Activated CD4-positive, alpha-beta memory T cell treated with anti-CD3 and anti-CD28 coated beads for 36 hours (primary cell): ENCODE measurements at regions of chr6 and their contacts with region 1.

Region 1: GRCh38 chr6:25138237-25139125 is 140.7 kb upstream of the CARMIL1 start:
- DNase-seq: peak; percentile 81
- H3K4me3 Mint-ChIP-seq: peak overlapping the region; percentile 89
- H3K27ac Mint-ChIP-seq: peak overlapping the region; percentile 99
- H3K4me1 Mint-ChIP-seq: peaks cover 40% of the 10 kb centered on the region
- H3K27me3 Mint-ChIP-seq: no peaks in the 10 kb centered on the region

Region 2: DNA sequence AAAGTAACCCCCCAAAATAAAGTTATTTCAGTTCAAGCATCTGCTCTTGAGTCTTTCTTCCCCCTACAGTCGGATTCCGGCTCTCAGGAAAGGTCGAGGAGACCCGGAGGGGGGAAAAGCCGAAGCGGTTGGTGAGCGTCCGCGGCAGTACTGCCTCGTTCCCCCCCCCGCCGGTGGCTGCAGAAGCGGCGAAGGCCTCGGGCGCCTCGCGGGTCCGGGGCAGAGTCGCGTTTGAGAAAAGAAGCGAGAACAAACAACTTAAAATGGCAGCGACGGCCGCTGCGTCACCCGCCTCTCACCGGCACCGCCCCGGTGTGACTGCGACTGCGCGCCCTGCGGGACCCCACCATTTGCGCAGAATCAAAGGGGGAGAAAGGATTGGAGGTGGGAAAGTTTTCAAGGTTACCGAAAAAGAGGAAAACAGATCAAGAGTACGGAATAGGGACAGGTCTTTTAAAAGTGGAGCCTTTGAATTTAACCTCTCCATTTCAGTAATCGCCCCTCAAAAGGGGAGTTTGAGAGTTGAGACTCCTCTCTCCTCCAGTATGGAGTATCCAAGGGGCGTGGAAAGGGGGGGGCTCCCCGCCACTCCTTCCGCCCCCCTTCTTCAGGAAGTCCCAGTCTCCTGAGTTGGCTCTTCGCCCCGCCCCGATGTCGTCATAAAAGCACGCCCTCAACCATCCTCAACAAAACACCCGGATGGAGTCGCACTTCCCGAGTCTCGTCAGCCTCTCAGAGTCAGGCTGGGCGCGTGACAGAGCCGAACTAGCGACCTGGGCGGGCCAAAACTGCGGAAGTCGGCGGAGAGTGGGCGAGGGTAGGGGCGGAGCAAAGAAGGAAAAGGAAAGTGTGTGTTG is 417.6 kb before region 1 on chr6:
- CTCF ChIA-PET with region 1: no interaction called
- POLR2A ChIA-PET with region 1: no interaction called
- intact Hi-C with region 1: loop called (anchors 1 kb)
- DNase-seq: peak; percentile 100
- H3K4me3 Mint-ChIP-seq: peak overlapping the region; percentile 100
- H3K27ac Mint-ChIP-seq: peak overlapping the region; percentile 99
- H3K4me1 Mint-ChIP-seq: peaks cover 32% of the 10 kb centered on the region
- H3K27me3 Mint-ChIP-seq: peaks cover 1% of the 10 kb centered on the region

Region 3: DNA sequence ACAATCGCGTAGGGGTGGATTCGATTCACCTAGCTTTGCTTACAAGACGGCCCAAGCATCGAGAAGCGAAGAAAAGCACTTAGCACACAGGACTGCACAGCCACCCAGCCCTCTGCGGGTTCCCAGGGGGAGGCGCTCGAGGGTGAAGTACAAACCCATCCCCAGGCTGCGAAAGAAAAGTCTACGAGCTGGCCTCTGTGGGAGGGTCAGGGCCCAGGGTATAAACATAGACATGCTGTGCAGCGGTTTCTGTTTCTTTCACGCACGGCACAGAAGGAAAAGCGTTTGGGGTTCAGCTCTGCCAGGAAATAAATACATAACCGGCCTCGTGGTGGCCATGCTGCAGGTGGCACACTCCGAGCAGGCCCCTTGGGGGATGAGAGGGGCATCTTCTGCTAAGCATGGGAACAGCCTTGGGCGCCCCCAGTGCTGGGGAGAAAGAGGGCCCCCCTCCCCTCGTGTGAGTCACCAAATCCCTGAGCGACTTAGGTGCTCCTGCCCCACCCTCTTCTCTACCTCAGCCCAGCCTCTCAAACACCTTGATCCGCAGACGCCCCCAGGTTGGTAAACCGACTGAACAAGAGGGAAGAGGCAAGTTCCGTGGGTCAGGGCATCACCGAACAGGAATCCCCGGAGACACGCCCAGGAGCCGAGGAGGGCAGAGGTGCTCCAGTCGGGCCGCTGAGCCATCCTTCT is 111.1 kb before region 1 on chr6:
- CTCF ChIA-PET with region 1: interaction called, 3 read pairs
- POLR2A ChIA-PET with region 1: interaction called, 14 read pairs
- intact Hi-C with region 1: loop called (anchors 1 kb)
- DNase-seq: peak; percentile 92
- H3K4me3 Mint-ChIP-seq: peak overlapping the region; percentile 70
- H3K27ac Mint-ChIP-seq: peak overlapping the region; percentile 96
- H3K4me1 Mint-ChIP-seq: peaks cover 75% of the 10 kb centered on the region
- H3K27me3 Mint-ChIP-seq: no peaks in the 10 kb centered on the region

Region 4: DNA sequence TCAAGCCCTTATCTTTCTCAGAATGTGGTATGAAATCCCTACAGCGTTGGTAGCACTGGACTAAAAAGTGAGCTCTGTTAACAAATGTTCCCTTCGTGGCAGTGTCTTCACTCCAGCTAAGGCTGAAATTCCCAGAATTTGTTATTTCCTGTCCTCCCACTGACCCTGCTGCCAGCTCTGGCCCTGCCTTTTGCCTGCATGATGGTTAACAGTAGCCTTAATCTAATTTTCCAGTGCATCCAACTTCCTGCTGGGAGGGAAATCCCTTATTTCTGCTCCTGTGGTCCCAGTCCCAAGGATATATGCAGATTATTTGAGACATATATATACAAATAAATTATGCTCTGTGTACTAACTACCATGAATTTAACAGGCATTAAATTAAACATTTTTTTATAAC is 16.5 kb before region 1 on chr6:
- CTCF ChIA-PET with region 1: no interaction called
- POLR2A ChIA-PET with region 1: interaction called, 5 read pairs
- intact Hi-C with region 1: loop called (anchors 1 kb)
- DNase-seq: no peak
- H3K4me3 Mint-ChIP-seq: no peak overlapping the region
- H3K27ac Mint-ChIP-seq: no peak overlapping the region
- H3K4me1 Mint-ChIP-seq: peaks cover 54% of the 10 kb centered on the region
- H3K27me3 Mint-ChIP-seq: no peaks in the 10 kb centered on the region

Region 5: GRCh38 chr6:25179051-25179778 is 40.7 kb after region 1 on chr6:
- CTCF ChIA-PET with region 1: interaction called, 5 read pairs
- POLR2A ChIA-PET with region 1: interaction called, 18 read pairs
- intact Hi-C with region 1: loop called (anchors 1 kb)
- DNase-seq: no peak
- H3K4me3 Mint-ChIP-seq: no peak overlapping the region
- H3K27ac Mint-ChIP-seq: peak overlapping the region; percentile 16
- H3K4me1 Mint-ChIP-seq: peaks cover 42% of the 10 kb centered on the region
- H3K27me3 Mint-ChIP-seq: no peaks in the 10 kb centered on the region

Region 6: DNA sequence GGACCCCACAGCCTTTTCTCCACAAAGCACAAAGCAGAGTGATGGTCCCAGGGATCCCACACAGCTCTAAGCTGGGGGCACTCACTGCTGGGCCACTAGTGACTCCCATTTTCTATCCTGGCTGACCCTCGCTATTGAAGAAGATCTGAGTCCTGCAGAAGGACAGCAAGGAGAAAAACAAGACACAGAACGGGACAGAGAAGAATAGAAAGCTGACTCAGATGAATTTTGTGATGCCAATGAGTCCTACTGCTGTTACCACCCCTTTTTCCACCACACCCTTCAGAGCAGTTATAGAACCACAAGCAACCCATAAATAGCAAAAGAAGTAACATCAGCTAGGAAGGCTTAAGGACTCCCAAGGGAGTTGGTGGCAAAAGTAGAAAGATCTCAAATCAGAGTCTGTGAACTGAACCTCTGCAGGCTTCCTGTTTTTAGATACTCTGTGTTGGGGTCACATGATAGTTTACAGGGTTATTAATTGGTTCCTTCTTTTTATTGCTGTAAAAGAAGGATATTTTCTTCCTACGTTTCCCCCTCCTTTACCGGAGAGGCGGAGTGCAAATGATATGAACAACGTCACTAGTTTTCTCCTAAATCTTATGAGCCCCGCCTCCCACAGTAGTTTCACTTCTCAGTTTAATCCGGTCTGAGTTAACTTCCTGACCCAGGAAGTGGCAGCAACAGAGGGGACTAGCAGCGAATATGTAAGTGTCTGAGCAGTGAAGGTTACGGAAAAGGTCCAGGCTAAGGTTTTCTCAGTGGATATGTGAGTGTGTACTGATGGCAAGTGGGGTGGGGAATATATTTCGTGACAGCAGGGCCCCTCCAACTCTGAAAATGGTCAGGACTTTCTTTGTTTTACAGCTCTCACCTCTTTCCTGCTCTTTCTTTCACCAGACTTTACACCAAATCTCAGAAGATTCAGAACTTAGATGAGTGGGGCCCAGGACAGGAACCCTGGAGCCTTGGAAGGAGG is 824.0 kb after region 1 on chr6 and contains the start of gene TRIM38:
- CTCF ChIA-PET with region 1: no interaction called
- POLR2A ChIA-PET with region 1: no interaction called
- intact Hi-C with region 1: loop called (anchors 2 kb)
- DNase-seq: peak; percentile 83
- H3K4me3 Mint-ChIP-seq: peak within 1 kb of the TSS; percentile 98
- H3K27ac Mint-ChIP-seq: peak within 1 kb of the TSS; percentile 100
- H3K4me1 Mint-ChIP-seq: peaks cover 77% of the 10 kb centered on the region
- H3K27me3 Mint-ChIP-seq: no peaks in the 10 kb centered on the region
- total RNA-seq, gene TRIM38: 29.5 to 30.8 TPM

Region 7: DNA sequence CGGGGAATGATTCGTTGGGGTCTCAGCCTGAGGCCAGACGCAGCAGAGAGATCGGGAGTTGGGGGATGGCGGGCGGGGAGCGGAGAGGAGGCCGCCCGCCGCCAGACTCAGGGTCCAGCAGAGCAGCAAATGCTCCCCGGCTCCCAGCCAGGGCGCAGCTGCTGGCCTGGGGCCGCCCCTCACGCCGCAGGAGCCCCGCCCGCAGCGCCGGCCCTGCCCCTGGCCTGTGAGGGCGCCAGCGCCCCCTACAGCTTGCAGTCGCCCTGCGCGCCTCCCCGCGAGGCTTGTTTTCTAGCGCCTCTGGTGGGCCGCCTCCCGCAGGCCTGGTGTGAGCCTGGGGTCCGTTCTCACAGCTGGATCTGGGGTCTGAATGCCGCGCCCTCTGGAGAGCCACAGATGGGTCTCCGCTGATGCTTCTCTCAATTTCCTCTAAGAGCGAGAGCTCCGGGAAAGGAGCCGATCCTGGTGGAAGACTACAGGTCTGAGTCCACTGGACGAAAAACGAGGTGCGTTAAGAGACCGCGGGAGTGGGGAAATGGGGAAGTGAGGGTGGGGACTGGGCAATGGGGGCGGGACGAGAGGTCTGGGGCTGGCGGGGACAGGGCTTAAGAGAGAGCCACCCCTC is 854.0 kb after region 1 on chr6:
- CTCF ChIA-PET with region 1: no interaction called
- POLR2A ChIA-PET with region 1: no interaction called
- intact Hi-C with region 1: loop called (anchors 1 kb)
- DNase-seq: peak; percentile 95
- H3K4me3 Mint-ChIP-seq: peak overlapping the region; percentile 96
- H3K27ac Mint-ChIP-seq: peak overlapping the region; percentile 89
- H3K4me1 Mint-ChIP-seq: peaks cover 18% of the 10 kb centered on the region
- H3K27me3 Mint-ChIP-seq: no peaks in the 10 kb centered on the region